Posterior vena cava (tissue), 2 donors: ENCODE measurements at regions of chr3 and their contacts with region 1.

Region 1: DNA sequence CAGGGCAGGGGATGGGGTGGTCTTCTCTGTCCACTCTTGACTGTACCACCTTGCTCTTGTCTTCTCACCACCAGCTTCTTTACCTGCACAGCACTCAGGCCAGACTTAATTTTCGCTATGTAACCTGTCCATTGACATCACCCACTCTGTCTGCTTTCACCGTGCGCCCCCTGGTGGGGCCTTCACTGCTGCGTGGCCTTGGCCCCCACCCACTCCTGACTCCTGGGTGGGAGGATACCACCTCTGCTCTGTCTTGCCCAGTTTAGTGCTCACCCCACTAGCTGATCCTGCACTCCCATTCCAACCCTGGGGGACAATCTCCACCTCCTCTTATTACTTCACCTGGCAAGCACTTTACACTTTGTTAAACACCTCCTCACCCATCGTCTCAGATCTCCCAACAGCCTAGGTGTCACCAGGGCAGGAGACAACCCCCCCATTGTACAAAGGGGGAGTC is 17.7 kb downstream of the PTH1R start:
- DNase-seq: peak; percentile 90

Region 2: GRCh38 chr3:46860017-46860830 is 35.0 kb before region 1 on chr3:
- intact Hi-C with region 1: loop called in 1 of 2 experiments (anchors 5 kb)
- DNase-seq: peak; percentile 64